ENCODE measurements at regions of chr20 and their contacts with region 1.

Region 1: GRCh38 chr20:48620519-48621254 is 207.1 kb downstream of the PREX1 start:
- DNase-seq: peak; percentile 90
- H3K4me3 ChIP-seq: peak overlapping the region; percentile 33 to 52; a peak in 3 of 4 replicates
- H3K27ac ChIP-seq: peak overlapping the region in 1 of 2 experiments; percentile 83; a peak in 2 of 4 replicates
- H3K4me1 ChIP-seq: peaks cover 0 to 27% of the 10 kb centered on the region in 2 experiments; a peak in 2 of 4 replicates
- H3K27me3 ChIP-seq: no peaks in the 10 kb centered on the region
- CTCF ChIP-seq: peak; percentile 82
- EP300 ChIP-seq: no peak
- RAD21 ChIP-seq: peak; percentile 97

Region 2: GRCh38 chr20:47725248-47725973 is 895.3 kb before region 1 on chr20:
- CTCF ChIA-PET with region 1: interaction called, 44 read pairs
- POLR2A ChIA-PET with region 1: no interaction called
- DNase-seq: peak; percentile 81
- H3K4me3 ChIP-seq: peak overlapping the region in 1 of 2 experiments; percentile 25; a peak in 1 of 4 replicates
- H3K27ac ChIP-seq: no peak overlapping the region
- H3K4me1 ChIP-seq: peaks cover 0 to 7% of the 10 kb centered on the region in 2 experiments; a peak in 1 of 4 replicates
- H3K27me3 ChIP-seq: no peaks in the 10 kb centered on the region
- CTCF ChIP-seq: peak; percentile 85
- EP300 ChIP-seq: no peak
- RAD21 ChIP-seq: peak; percentile 89

Region 3: DNA sequence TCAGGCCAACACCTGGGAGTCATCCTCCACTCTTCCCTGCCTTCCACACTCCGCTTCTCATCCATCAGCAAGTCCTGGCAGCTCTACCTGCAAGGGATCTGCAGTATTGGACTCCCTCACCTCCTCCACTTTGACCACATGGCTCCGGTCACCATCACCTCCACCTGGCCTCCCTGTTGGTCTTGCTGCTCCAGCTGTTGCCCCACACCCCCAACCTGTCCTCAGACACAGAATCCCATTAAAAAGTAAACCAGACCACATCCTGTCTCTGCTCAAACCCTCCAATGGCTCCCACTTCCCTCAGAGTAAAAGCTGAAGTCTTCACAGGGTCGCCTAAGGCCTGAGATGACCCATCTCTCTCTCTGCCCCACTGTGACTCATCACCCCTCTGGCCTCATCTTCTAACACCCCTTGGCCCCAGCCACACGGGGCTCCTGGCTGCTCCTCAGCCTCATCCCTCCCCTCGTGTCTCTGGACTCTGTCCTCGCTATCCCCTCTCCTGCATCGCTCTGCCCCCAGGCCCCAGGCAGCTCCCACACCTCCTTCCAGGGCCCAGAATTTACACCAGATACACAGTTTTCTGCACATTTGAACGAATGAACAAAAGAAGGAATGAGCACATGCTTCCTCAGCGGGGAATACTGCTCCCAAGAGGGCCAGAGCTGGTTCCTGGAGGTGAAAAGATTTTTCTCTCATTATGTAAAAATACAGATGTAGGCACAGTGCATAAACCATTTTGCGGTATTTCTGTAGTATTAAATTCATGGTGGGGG is 650.2 kb before region 1 on chr20:
- CTCF ChIA-PET with region 1: interaction called, 12 read pairs
- POLR2A ChIA-PET with region 1: no interaction called
- DNase-seq: peak; percentile 44
- H3K4me3 ChIP-seq: no peak overlapping the region
- H3K27ac ChIP-seq: no peak overlapping the region
- H3K4me1 ChIP-seq: peaks cover 0 to 9% of the 10 kb centered on the region in 2 experiments; a peak in 1 of 4 replicates
- H3K27me3 ChIP-seq: no peaks in the 10 kb centered on the region
- CTCF ChIP-seq: no peak
- EP300 ChIP-seq: no peak
- RAD21 ChIP-seq: no peak

Region 4: GRCh38 chr20:48308882-48309281 is 311.8 kb before region 1 on chr20:
- CTCF ChIA-PET with region 1: interaction called, 16 read pairs
- POLR2A ChIA-PET with region 1: no interaction called
- DNase-seq: no peak
- H3K4me3 ChIP-seq: no peak overlapping the region
- H3K27ac ChIP-seq: peak overlapping the region in 1 of 2 experiments; percentile 67; a peak in 2 of 4 replicates
- H3K4me1 ChIP-seq: peaks cover 0 to 12% of the 10 kb centered on the region in 2 experiments; a peak in 2 of 4 replicates
- H3K27me3 ChIP-seq: no peaks in the 10 kb centered on the region
- CTCF ChIP-seq: no peak
- EP300 ChIP-seq: no peak
- RAD21 ChIP-seq: no peak

Region 5: GRCh38 chr20:48460702-48461429 is 159.8 kb before region 1 on chr20:
- CTCF ChIA-PET with region 1: interaction called, 12 read pairs
- POLR2A ChIA-PET with region 1: no interaction called
- DNase-seq: no peak
- H3K4me3 ChIP-seq: no peak overlapping the region
- H3K27ac ChIP-seq: no peak overlapping the region
- H3K4me1 ChIP-seq: peaks cover 0 to 13% of the 10 kb centered on the region in 2 experiments; a peak in 1 of 4 replicates
- H3K27me3 ChIP-seq: no peaks in the 10 kb centered on the region
- CTCF ChIP-seq: no peak
- EP300 ChIP-seq: no peak
- RAD21 ChIP-seq: no peak

Region 6: DNA sequence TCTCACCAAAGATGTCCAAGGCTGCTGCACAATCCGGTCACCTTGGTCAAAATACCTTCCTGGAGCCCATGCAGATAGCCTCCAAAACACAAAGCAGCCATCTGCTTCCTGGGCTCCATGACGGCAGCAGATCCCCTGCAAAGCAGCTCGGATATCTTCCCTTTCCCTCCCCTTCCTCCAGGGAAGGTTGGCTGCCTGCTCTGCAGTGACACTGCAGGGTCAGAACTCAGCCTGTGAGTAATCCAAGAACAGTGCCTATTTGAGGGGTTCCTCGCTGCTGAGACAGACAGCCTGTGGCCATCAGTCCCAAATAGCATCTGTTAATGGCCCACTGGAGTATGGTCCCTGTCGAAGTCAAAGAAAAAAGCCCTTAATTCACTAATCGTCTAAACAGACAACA is 63.7 kb before region 1 on chr20:
- CTCF ChIA-PET with region 1: interaction called, 49 read pairs
- POLR2A ChIA-PET with region 1: interaction called, 3 read pairs
- DNase-seq: peak; percentile 57
- H3K4me3 ChIP-seq: no peak overlapping the region
- H3K27ac ChIP-seq: peak overlapping the region in 1 of 2 experiments; percentile 76; a peak in 2 of 4 replicates
- H3K4me1 ChIP-seq: peaks cover 0 to 27% of the 10 kb centered on the region in 2 experiments; a peak in 2 of 4 replicates
- H3K27me3 ChIP-seq: no peaks in the 10 kb centered on the region; the same call in 1 of the 2 replicates
- CTCF ChIP-seq: no peak
- EP300 ChIP-seq: no peak
- RAD21 ChIP-seq: no peak

Measured in SK-N-SH (cell line).